SK-N-SH (cell line): ENCODE measurements at regions of chr6 and their contacts with region 1.

Region 1: GRCh38 chr6:96015518-96016333 is at the start of gene FUT9:
- DNase-seq: peak; percentile 85
- H3K4me3 ChIP-seq: peak within 1 kb of the TSS in 1 of 2 experiments; percentile 40; a peak in 2 of 4 replicates
- H3K27ac ChIP-seq: no peak within 1 kb of the TSS; a peak in 1 of 4 replicates
- H3K4me1 ChIP-seq: peaks cover 0 to 6% of the 10 kb centered on the region in 2 experiments; a peak in 1 of 4 replicates
- H3K27me3 ChIP-seq: no peaks in the 10 kb centered on the region
- CTCF ChIP-seq: no peak
- EP300 ChIP-seq: no peak
- RAD21 ChIP-seq: no peak
- polyA plus RNA-seq, gene FUT9: under 0.01 and 0.02 TPM in 2 replicates

Region 2: DNA sequence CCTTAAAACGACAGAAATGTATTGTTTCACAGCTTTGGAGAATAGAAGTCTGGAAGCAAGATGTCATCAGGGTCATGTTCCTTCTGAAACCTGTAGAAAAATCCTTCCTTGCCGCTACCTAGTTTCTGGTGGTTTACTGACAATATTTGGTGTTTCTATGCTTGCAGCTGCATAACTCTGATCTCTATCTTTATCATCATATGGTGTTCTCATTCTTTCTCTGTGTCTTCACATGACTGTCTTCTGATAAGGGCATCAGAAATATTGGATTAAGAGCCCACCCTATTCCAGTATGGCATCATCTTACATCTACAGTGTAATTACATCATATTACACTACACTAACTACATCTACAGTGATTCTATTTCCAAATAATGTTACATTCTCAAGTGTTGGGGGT is 290.4 kb before region 1 on chr6:
- CTCF ChIA-PET with region 1: no interaction called
- POLR2A ChIA-PET with region 1: no interaction called
- DNase-seq: no peak
- H3K4me3 ChIP-seq: no peak overlapping the region
- H3K27ac ChIP-seq: no peak overlapping the region
- H3K4me1 ChIP-seq: no peaks in the 10 kb centered on the region
- H3K27me3 ChIP-seq: no peaks in the 10 kb centered on the region
- CTCF ChIP-seq: no peak
- EP300 ChIP-seq: no peak
- RAD21 ChIP-seq: no peak

Region 3: GRCh38 chr6:96032661-96033060 is 16.9 kb after region 1 on chr6:
- CTCF ChIA-PET with region 1: interaction called, 12 read pairs
- POLR2A ChIA-PET with region 1: no interaction called
- DNase-seq: no peak
- H3K4me3 ChIP-seq: no peak overlapping the region
- H3K27ac ChIP-seq: no peak overlapping the region
- H3K4me1 ChIP-seq: no peaks in the 10 kb centered on the region; a peak in 1 of 4 replicates
- H3K27me3 ChIP-seq: no peaks in the 10 kb centered on the region
- CTCF ChIP-seq: no peak
- EP300 ChIP-seq: no peak
- RAD21 ChIP-seq: no peak